ENCODE measurements at regions of chr5 and their contacts with region 1.

Region 1: DNA sequence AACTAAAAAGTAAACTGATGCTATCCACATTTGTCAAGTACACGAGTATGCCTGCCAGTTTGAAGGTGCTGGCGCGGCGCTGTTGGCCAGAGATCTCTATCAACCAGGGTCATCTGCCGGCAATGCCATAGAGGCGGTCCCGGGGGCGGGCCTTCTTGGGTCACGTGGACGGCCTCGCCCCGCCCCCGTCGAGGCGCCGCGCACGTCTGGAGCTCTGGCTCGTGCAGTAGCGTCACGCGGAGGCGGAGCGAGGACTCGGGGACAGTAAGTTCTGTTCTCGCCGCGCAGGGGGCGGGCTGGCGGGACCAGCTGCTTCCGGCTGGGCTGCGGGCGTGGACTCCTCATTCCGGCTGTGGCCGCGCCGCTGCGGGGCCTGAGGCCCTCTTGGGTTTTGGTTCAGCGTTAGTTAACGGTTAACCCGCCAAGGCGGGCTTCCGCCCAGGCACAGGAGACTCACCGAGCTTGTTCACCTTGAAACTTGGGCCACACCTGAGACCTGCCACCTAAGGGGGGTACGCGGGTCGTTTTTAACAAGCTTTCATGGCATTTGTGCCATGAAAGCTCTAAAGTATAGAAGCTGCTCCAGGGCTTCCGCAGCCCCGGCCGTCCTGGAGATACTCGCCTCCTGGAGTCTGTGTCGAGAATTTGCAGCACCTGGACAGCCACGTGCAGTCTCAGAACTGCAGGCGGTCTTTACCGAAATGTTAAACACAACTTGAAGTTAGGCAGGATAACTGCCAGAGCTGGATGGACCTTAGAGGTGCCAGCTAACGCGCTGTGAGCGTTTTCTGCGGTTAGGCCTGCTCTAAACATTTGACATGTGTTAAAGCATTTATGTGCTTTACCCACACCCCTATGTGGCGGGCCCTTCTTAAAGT is at the start of gene RFESD:
- DNase-seq: peak; percentile 97
- ATAC-seq: peak; percentile 96
- H3K4me3 Mint-ChIP-seq: peak within 1 kb of the TSS; percentile 86
- H3K27ac Mint-ChIP-seq: peak within 1 kb of the TSS; percentile 87
- H3K4me1 Mint-ChIP-seq: peaks cover 26% of the 10 kb centered on the region
- H3K27me3 Mint-ChIP-seq: no peaks in the 10 kb centered on the region
- CTCF ChIP-seq: no peak
- total RNA-seq, gene RFESD: 1.8 and 2.4 TPM in 2 replicates

Region 2: GRCh38 chr5:95554647-95555548 is 91.9 kb before region 1 on chr5 and contains the starts of genes ARSK and SKIC3:
- CTCF ChIA-PET with region 1: interaction called, 4 read pairs
- POLR2A ChIA-PET with region 1: interaction called, 7 read pairs
- intact Hi-C with region 1: loop called (anchors 1 kb)
- DNase-seq: peak; percentile 80
- ATAC-seq: peak; percentile 86
- H3K4me3 Mint-ChIP-seq: peak within 1 kb of the TSS; percentile 95
- H3K27ac Mint-ChIP-seq: peak within 1 kb of the TSS; percentile 92
- H3K4me1 Mint-ChIP-seq: peaks cover 43% of the 10 kb centered on the region
- H3K27me3 Mint-ChIP-seq: no peaks in the 10 kb centered on the region
- CTCF ChIP-seq: no peak
- total RNA-seq, gene ARSK: 2.3 and 2.9 TPM in 2 replicates
- total RNA-seq, gene SKIC3: 67.4 and 78.7 TPM in 2 replicates

Region 3: DNA sequence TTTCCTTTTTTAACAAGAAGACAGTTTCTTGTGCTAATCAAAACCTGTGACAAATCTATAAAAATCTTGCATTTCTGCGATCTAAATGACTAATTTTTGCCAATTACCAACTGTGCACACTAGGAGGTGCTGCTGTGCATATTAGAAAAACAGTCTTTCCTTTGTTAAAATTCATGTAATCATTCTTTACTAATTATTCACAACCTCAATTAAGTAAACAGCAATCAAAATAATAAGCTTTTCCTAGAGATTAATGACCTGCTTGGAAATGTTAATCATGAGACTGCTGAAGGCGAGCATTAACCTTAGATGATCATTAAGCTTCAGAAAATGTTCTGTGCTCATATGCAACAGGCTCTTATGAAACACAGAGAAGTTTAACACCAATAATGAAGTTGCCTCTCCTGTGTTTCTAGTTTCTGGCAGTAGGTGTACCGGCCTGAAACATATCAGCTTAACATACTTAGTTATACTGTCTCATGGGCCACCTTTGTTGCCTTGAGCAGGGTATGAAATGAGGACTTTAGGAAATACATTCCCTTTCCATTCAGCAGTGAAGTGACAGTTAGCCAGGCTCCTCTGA is 17.5 kb after region 1 on chr5:
- CTCF ChIA-PET with region 1: interaction called, 12 read pairs
- POLR2A ChIA-PET with region 1: interaction called, 3 read pairs
- intact Hi-C with region 1: loop called (anchors 1 kb)
- DNase-seq: no peak
- ATAC-seq: no peak
- H3K4me3 Mint-ChIP-seq: no peak overlapping the region
- H3K27ac Mint-ChIP-seq: no peak overlapping the region
- H3K4me1 Mint-ChIP-seq: no peaks in the 10 kb centered on the region
- H3K27me3 Mint-ChIP-seq: peaks cover 1% of the 10 kb centered on the region
- CTCF ChIP-seq: peak; percentile 81

Region 4: GRCh38 chr5:95712347-95712958 is 65.7 kb after region 1 on chr5:
- CTCF ChIA-PET with region 1: no interaction called
- POLR2A ChIA-PET with region 1: no interaction called
- intact Hi-C with region 1: no loop called
- DNase-seq: no peak
- ATAC-seq: no peak
- H3K4me3 Mint-ChIP-seq: no peak overlapping the region
- H3K27ac Mint-ChIP-seq: no peak overlapping the region
- H3K4me1 Mint-ChIP-seq: no peaks in the 10 kb centered on the region
- H3K27me3 Mint-ChIP-seq: no peaks in the 10 kb centered on the region
- CTCF ChIP-seq: no peak

Region 5: GRCh38 chr5:95781101-95781583 is 134.3 kb after region 1 on chr5:
- CTCF ChIA-PET with region 1: interaction called, 69 read pairs
- POLR2A ChIA-PET with region 1: interaction called, 6 read pairs
- intact Hi-C with region 1: loop called (anchors 1 kb)
- DNase-seq: peak; percentile 46
- ATAC-seq: peak; percentile 99
- H3K4me3 Mint-ChIP-seq: peak overlapping the region; percentile 21
- H3K27ac Mint-ChIP-seq: peak overlapping the region; percentile 43
- H3K4me1 Mint-ChIP-seq: peaks cover 7% of the 10 kb centered on the region
- H3K27me3 Mint-ChIP-seq: no peaks in the 10 kb centered on the region
- CTCF ChIP-seq: no peak

Region 6: GRCh38 chr5:95835682-95836385 is 189.0 kb after region 1 on chr5:
- CTCF ChIA-PET with region 1: interaction called, 4 read pairs
- POLR2A ChIA-PET with region 1: interaction called, 8 read pairs
- intact Hi-C with region 1: loop called (anchors 1 kb)
- DNase-seq: no peak
- ATAC-seq: no peak
- H3K4me3 Mint-ChIP-seq: peak overlapping the region; percentile 92
- H3K27ac Mint-ChIP-seq: peak overlapping the region; percentile 84
- H3K4me1 Mint-ChIP-seq: peaks cover 55% of the 10 kb centered on the region
- H3K27me3 Mint-ChIP-seq: no peaks in the 10 kb centered on the region
- CTCF ChIP-seq: no peak

Region 7: DNA sequence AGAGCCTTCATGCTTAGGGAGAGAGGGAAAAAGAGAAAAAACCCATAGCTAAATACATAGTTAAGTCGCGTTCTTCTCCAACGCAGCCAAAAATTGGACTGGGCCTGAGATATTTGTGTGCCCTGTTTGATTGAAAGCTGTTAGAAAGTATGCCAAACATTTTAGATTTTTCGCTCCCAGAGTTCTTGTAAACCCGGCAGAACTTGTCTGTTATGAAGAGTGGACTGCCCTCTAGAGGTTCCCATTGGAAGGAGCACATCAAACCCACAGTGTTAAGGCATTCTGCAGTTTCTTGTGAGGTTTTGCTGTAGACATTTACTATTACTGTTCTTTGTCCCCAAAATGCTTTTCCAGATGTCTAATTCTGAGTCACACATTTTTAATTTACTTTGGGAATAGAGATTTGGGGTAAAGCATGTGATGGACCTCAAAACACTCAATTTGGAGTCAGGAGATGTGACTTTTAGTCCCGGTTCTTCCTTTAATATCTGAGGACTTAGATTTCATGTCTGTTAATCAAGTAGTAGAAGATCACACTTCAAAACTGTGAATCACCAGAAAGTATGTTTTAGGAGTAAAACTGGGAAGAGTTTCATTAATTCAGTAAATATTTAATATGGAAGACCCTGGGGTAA is 689.7 kb after region 1 on chr5:
- CTCF ChIA-PET with region 1: no interaction called
- POLR2A ChIA-PET with region 1: no interaction called
- intact Hi-C with region 1: loop called (anchors 1 kb)
- DNase-seq: no peak
- ATAC-seq: peak; percentile 91
- H3K4me3 Mint-ChIP-seq: no peak overlapping the region
- H3K27ac Mint-ChIP-seq: no peak overlapping the region
- H3K4me1 Mint-ChIP-seq: no peaks in the 10 kb centered on the region
- H3K27me3 Mint-ChIP-seq: peaks cover 6% of the 10 kb centered on the region
- CTCF ChIP-seq: peak; percentile 23

Region 8: DNA sequence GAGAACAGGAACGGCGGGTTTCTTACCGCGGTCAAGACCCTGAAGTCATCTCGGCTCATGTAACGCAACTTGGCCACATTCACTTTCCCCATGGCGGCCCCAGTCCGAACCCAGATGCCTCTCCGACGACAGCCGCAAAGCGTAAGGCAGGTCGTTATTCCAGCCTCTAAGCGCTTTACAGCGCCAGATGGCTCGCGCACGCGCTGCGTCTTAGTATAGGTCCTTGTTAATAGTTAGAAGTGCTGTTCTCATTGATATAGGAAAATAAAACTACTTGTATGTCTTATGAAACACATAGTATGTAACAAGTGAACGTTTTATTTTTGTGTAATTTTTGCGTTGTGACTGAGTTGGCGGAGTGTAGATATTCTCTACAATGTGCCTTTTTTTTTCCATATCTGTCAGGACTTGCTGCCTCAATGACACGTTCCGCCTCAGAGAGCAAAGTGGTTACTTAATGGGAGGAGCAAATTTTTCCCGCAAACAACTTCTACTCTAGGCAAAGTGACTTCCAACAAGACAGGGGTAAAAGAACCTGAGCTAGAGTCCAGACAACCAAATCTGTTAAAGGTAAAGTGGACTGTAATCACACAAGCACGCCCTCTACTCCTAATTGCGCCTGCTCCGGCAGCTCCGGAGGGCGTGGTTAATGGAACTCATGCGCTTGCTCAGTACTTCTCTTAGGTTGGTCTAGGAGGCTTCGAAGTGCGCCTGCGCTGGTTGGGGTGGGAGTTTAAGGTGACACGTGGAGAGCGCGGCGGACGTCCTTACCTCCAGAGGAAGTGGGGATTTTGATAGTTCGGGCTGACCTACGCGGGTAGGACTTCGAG is 1536.5 kb after region 1 on chr5 and contains the start of gene RIOK2:
- CTCF ChIA-PET with region 1: no interaction called
- POLR2A ChIA-PET with region 1: no interaction called
- intact Hi-C with region 1: loop called (anchors 1 kb)
- DNase-seq: peak; percentile 78
- ATAC-seq: peak; percentile 89
- H3K4me3 Mint-ChIP-seq: peak within 1 kb of the TSS; percentile 96
- H3K27ac Mint-ChIP-seq: peak within 1 kb of the TSS; percentile 99
- H3K4me1 Mint-ChIP-seq: peaks cover 34% of the 10 kb centered on the region
- H3K27me3 Mint-ChIP-seq: no peaks in the 10 kb centered on the region
- CTCF ChIP-seq: no peak
- total RNA-seq, gene RIOK2: 38.3 and 41.4 TPM in 2 replicates

Measured in activated B cell treated with CpG ODN at 0.5 μM for 24 hours (primary cell).